ENCODE measurements at regions of chr11 and their contacts with region 1.

Region 1: DNA sequence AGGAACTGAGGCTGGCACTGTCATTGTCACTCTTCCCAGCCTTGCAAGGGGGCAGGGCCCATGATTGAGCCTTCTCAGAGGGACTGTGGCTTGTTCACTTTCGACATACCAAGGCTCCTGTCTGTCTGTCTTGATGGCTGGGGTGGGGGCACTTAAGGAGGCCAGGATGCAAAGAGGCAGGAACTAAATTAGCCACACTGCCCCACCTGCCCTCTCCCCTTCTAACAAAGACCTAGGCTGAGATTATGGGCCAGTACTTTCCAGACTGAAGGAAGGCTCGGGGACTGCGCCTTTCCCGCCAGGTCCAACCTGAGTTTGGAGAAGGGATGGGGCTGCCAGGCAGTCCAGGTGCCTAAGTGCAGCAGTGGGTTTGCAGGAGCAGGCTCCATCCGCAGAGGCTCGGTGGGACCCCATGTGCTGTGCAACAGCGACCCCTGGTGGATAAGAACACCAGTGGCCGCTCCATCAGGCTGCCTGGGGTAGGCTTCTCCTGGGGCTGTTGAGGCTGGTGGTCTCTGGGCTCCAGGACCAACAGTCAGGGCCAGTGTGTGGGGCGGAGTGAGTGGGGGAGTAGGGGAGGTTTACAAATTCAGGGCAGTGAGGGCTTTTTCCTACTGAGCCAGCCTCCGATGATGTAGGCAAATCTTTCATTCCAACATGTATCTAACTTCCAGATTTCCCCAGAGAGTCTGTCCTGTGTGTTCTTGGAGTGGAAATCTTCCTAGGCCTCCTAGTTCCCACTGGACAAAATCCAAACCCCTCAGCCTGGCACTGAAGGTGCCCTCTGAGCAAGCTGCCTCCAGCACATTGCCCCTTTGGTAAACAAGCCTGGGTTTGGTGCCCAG is 93.9 kb downstream of the INSC start:
- DNase-seq: peak; percentile 66
- ATAC-seq: peak; percentile 97
- H3K4me3 Mint-ChIP-seq: no peak overlapping the region
- H3K27ac Mint-ChIP-seq: no peak overlapping the region
- H3K4me1 Mint-ChIP-seq: no peaks in the 10 kb centered on the region
- H3K27me3 Mint-ChIP-seq: peaks cover 12% of the 10 kb centered on the region
- CTCF ChIP-seq: peak; percentile 67

Region 2: GRCh38 chr11:14537134-14537599 is 671.4 kb before region 1 on chr11:
- CTCF ChIA-PET with region 1: no interaction called
- POLR2A ChIA-PET with region 1: no interaction called
- intact Hi-C with region 1: loop called (anchors 1 kb)
- DNase-seq: no peak
- ATAC-seq: peak; percentile 88
- H3K4me3 Mint-ChIP-seq: peak overlapping the region; percentile 80
- H3K27ac Mint-ChIP-seq: peak overlapping the region; percentile 81
- H3K4me1 Mint-ChIP-seq: peaks cover 9% of the 10 kb centered on the region
- H3K27me3 Mint-ChIP-seq: no peaks in the 10 kb centered on the region
- CTCF ChIP-seq: peak; percentile 86

Region 3: GRCh38 chr11:14974515-14975251 is 233.9 kb before region 1 on chr11:
- CTCF ChIA-PET with region 1: no interaction called
- POLR2A ChIA-PET with region 1: no interaction called
- intact Hi-C with region 1: loop called (anchors 1 kb)
- DNase-seq: no peak
- ATAC-seq: peak; percentile 51
- H3K4me3 Mint-ChIP-seq: peak overlapping the region; percentile 62
- H3K27ac Mint-ChIP-seq: no peak overlapping the region
- H3K4me1 Mint-ChIP-seq: peaks cover 30% of the 10 kb centered on the region
- H3K27me3 Mint-ChIP-seq: peaks cover 62% of the 10 kb centered on the region
- CTCF ChIP-seq: no peak

Region 4: DNA sequence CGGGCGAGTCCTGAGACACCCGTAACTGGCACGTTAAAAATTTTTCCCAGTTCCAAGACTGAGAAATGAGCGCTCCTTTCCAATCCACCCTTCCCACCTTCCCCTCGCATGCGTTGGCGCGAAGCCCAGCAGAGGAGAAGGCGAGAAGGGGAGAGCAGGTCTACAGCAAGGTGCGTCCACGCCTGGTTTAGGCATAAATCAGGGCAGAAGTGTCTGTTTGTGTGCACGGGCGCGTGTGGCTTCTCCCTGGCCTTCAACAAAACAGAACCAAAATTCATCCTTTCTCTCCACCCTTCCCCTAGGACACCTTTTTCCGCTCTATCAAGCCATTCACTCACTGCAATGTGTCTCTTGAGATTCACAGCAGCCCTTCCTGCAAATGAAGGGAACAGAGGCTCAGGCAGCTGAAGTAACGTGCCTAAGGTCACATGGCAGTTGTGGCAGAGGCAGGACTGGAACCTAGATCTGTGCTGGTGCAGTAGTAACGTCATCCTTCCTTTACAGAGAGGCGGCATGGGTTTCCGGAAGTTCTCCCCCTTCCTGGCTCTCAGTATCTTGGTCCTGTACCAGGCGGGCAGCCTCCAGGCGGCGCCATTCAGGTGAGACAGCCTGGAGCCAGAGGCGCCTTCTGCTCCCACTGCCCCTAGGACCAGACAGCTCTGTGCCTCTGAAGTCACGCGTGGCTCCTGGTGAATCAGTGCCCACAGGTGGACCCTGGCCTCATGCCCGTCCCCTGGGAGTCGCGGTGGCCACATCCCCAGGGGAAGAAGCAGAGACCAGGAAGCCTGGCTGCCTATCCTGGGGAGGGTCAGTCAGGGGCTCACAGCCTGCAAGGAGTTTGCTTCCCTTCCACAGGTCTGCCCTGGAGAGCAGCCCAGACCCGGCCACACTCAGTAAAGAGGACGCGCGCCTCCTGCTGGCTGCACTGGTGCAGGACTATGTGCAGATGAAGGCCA is 134.1 kb before region 1 on chr11:
- CTCF ChIA-PET with region 1: no interaction called
- POLR2A ChIA-PET with region 1: no interaction called
- intact Hi-C with region 1: loop called (anchors 1 kb)
- DNase-seq: peak; percentile 67
- ATAC-seq: peak; percentile 89
- H3K4me3 Mint-ChIP-seq: peak overlapping the region; percentile 61
- H3K27ac Mint-ChIP-seq: no peak overlapping the region
- H3K4me1 Mint-ChIP-seq: peaks cover 18% of the 10 kb centered on the region
- H3K27me3 Mint-ChIP-seq: peaks cover 34% of the 10 kb centered on the region
- CTCF ChIP-seq: peak; percentile 35

Region 5: DNA sequence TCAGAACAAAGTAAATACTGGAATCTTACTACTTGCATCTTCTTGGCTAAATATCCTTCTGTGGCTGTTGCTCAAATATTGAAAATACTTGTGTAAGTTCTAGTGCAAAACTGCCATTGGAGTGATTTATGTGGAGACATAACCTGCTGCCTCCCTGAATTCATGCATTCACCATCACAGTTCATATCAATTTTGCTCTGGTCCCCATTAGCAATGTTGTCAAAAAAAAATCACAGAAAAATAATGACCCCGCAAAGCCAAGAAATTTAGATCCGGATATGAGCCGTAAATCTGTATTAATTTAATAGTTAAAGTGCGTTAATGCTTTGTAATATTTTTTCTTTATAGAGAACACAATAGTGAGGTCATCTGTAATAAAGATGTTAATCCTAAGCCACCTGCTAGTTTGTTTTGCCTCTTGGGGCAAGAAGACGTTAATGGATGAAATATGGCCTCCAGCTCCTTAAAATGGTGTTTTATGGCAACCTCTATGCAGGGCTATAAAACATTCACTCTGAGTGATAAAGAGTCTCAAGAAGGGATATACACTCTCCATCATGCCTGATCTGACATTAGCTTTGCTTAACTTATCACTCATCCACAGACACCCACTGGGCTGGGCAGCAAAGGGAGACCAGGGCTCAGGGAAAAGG is 162.0 kb after region 1 on chr11:
- CTCF ChIA-PET with region 1: no interaction called
- POLR2A ChIA-PET with region 1: no interaction called
- intact Hi-C with region 1: no loop called
- DNase-seq: no peak
- ATAC-seq: no peak
- H3K4me3 Mint-ChIP-seq: no peak overlapping the region
- H3K27ac Mint-ChIP-seq: no peak overlapping the region
- H3K4me1 Mint-ChIP-seq: no peaks in the 10 kb centered on the region
- H3K27me3 Mint-ChIP-seq: no peaks in the 10 kb centered on the region
- CTCF ChIP-seq: no peak